Calu3 (cell line): ENCODE measurements at regions of chr2 and their contacts with region 1.

Region 1: DNA sequence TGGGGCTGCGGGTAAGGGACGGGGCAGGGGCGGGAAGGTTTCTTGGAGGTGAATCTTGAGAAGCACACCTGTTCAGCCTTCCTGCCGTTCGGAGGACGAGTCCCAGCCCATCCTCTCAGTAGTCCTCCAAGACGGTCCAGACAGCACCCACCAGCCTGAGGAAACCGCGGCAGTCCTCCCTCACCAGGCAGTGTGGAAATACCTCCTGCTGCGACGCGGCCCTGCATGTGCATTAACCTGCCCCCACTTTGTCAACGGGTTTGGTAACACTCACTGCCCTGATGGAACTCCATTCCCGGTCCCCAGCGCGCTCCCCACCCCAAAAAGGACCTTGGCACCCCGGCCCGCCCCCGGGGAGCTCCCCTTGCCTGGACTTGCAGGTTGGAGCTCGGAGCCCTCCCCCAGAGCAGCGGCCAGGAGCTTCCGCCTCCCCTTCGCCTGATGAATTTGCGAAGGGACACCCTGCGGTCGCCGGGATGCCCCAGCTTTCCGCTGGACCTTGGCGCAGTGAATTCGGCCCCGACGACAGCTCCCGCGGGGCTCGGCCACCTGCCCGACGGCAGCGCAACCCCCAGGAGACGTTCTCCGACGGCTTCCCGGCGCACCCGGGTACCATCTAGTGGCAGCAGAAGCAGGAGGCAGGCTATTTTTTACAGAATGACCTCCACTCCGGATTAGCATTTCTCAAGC is 31.5 kb downstream of the ACVR1C start:
- DNase-seq: peak; percentile 73
- H3K4me3 Mint-ChIP-seq: peak overlapping the region; percentile 58
- H3K27ac Mint-ChIP-seq: no peak overlapping the region
- H3K4me1 Mint-ChIP-seq: no peaks in the 10 kb centered on the region
- H3K27me3 Mint-ChIP-seq: peaks cover 15% of the 10 kb centered on the region
- CTCF ChIP-seq: no peak

Region 2: DNA sequence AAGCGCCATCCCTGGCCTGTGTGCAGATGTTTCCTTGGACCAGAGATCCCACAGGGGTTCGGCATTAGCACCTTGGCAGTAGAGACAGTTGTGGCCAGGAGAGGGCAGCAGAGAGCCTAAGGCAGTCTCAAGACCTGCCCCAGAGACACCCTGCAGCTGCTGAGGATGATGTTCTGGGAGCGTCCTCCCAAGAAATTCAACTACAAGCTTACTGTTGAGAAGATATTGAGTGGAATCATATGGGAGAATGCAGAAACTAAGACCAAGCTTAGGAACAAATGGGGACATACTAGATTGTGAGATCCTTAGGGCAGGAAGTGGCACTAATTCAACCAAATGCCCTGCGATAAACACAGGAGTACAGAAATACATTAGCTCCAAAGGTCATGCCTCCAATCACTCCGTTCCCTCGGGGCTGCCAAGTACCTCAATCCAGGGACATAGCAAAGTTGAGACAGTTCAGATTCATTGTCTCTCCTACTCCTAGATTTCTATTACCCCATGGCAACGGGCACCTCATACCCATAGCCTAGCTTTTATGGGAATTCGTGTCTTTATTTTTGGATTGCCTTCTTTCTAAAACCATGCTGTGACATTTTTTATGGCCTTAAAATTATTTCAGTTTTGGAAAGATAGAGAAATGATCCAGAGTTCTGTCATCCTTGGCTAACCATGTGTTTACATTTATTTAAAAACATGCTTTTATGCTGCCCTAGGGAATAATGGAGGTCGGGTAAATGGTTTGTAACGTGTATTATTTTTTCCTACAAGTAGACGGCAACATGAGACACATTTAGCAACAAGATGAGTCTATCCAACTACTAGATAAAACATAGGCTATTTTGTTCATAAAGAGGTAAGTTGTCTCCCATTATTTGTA is 269.3 kb before region 1 on chr2:
- CTCF ChIA-PET with region 1: interaction called, 3 read pairs
- intact Hi-C with region 1: loop called (anchors 5 kb)
- DNase-seq: peak; percentile 84
- H3K4me3 Mint-ChIP-seq: no peak overlapping the region
- H3K27ac Mint-ChIP-seq: no peak overlapping the region
- H3K4me1 Mint-ChIP-seq: peaks cover 19% of the 10 kb centered on the region
- H3K27me3 Mint-ChIP-seq: no peaks in the 10 kb centered on the region
- CTCF ChIP-seq: peak; percentile 93

Region 3: DNA sequence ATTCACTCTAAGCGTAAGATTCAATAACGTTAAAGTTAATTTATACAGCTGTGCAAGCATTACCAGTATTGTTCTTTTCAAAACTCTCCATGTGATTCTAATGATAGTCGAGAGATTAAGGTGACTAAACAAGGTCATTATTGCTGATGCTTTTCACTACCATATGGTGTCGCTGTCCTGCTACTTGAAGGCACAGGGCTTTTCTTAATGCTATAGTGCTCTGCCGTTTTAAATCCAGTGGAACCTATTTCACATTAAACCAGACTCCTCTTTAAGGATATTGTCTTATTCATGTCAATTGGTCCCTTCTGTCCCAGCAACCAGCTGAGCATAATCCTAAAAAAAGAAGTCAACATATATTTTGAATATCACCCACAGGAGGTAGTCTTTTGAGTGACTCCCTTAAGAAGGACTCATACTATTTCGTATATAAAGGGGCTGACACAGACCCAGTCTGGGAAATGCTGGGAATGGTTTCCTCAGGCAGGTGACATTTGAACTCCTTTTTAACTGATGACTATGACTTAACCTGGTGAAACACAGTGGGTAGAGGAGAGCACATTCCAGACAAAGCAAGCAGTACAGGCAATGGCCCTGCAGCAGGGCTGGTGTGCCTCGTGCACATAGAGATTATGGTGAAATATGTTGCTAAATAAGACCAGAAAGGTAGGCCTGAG is 99.4 kb before region 1 on chr2:
- CTCF ChIA-PET with region 1: interaction called, 3 read pairs
- intact Hi-C with region 1: loop called (anchors 1 kb)
- DNase-seq: no peak
- H3K4me3 Mint-ChIP-seq: no peak overlapping the region
- H3K27ac Mint-ChIP-seq: no peak overlapping the region
- H3K4me1 Mint-ChIP-seq: no peaks in the 10 kb centered on the region
- H3K27me3 Mint-ChIP-seq: peaks cover 7% of the 10 kb centered on the region
- CTCF ChIP-seq: peak; percentile 47